ENCODE measurements at regions of chr3 and their contacts with region 1.

Region 1: GRCh38 chr3:121749276-121750086 is at the start of gene GOLGB1:
- DNase-seq: peak; percentile 93 to 99
- H3K4me3 ChIP-seq: peak within 1 kb of the TSS; percentile 75 to 89 (median 86)
- H3K27ac ChIP-seq: peak within 1 kb of the TSS; percentile 98 to 99
- H3K4me1 ChIP-seq: peaks cover 0 to 17% of the 10 kb centered on the region in 2 donors
- H3K27me3 ChIP-seq: no peaks in the 10 kb centered on the region
- CTCF ChIP-seq: peak; percentile 15 to 37 (median 23)
- POLR2A ChIP-seq: peak; percentile 99
- total RNA-seq, gene GOLGB1: 95.4 to 106 (median 95.4) TPM

Region 2: DNA sequence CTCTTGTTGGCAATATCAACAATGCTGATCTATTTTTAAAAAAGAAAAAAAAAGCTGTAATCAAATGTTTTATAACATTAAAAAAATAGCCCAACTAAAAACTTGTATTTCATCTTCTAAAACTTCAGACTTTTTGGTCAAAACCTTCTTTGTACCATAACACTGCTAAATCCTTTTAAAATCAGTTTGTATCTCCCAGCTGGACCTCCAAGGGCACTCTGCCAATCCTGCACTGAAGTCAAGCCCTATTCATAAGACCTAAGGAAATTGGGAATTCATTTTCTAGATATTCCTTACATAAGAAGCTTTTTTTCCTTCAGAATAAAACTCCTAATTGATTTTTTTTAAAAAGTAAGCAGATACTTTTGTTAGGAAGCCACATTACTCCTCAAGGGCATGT is 50.6 kb before region 1 on chr3:
- intact Hi-C with region 1: loop called (anchors 2 kb)
- DNase-seq: no peak
- H3K4me3 ChIP-seq: no peak overlapping the region
- H3K27ac ChIP-seq: no peak overlapping the region
- H3K4me1 ChIP-seq: no peaks in the 10 kb centered on the region
- H3K27me3 ChIP-seq: no peaks in the 10 kb centered on the region
- CTCF ChIP-seq: no peak
- POLR2A ChIP-seq: no peak

Region 3: GRCh38 chr3:121724130-121724529 is 25.4 kb before region 1 on chr3:
- intact Hi-C with region 1: no loop called
- DNase-seq: no peak
- H3K4me3 ChIP-seq: no peak overlapping the region
- H3K27ac ChIP-seq: no peak overlapping the region
- H3K4me1 ChIP-seq: no peaks in the 10 kb centered on the region
- H3K27me3 ChIP-seq: no peaks in the 10 kb centered on the region
- CTCF ChIP-seq: no peak
- POLR2A ChIP-seq: no peak

Region 4: GRCh38 chr3:122456074-122456473 is 706.6 kb after region 1 on chr3:
- intact Hi-C with region 1: no loop called
- DNase-seq: no peak
- H3K4me3 ChIP-seq: no peak overlapping the region
- H3K27ac ChIP-seq: no peak overlapping the region
- H3K4me1 ChIP-seq: no peaks in the 10 kb centered on the region
- H3K27me3 ChIP-seq: no peaks in the 10 kb centered on the region
- CTCF ChIP-seq: no peak
- POLR2A ChIP-seq: no peak

Measured in breast epithelium (tissue), 4 donors.